B cell (primary cell): ENCODE measurements at regions of chr17 and their contacts with region 1.

Region 1: DNA sequence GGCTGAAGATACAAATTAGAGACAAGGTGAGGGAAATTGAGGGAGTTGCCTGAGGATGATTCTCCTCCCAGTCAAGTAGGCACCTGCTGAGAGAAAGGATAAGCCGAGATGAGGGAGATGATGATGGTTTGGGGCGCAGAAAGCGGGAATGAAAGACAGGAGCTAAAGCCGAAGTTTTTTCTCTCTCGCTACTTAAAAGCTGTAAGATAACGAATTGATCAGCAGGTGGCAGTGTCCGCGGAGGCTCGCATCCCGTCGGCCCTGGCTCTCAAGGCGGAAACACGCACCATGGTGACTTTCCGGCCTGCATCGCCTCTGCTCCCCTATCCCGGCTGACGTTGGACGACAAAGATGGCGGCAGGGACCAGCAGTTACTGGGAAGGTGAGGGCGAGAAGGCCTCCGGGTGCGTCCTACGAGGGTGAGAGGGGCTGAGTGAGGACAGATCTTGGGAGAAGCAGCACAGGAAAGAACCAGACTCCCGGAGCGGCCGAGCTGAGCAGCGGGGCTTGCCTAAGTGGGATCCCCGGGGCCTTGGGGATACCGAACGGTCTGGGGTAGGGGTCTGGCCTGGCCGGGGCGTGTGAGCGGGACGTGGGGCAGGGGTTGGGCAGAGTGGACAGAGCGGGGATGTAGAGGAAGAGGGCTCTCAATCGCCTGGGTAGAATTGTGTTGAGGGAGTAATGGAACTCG is at the start of gene GOSR1:
- DNase-seq: peak; percentile 94
- ATAC-seq: peak; percentile 99
- H3K4me3 ChIP-seq: peak within 1 kb of the TSS; percentile 77 to 93 (median 81)
- H3K4me3 Mint-ChIP-seq: peak within 1 kb of the TSS; percentile 94
- H3K27ac ChIP-seq: peak within 1 kb of the TSS; percentile 92 to 99
- H3K27ac Mint-ChIP-seq: peak within 1 kb of the TSS; percentile 96
- H3K4me1 ChIP-seq: peaks cover 20 to 22% of the 10 kb centered on the region in 2 donors
- H3K4me1 Mint-ChIP-seq: peaks cover 33% of the 10 kb centered on the region
- H3K27me3 ChIP-seq: peaks cover 0 to 4% (median 0%) of the 10 kb centered on the region in 4 experiments
- H3K27me3 Mint-ChIP-seq: no peaks in the 10 kb centered on the region
- CTCF ChIP-seq: peak; percentile 75
- total RNA-seq, gene GOSR1: 66.6 and 68.8 TPM in 2 replicates

Region 2: GRCh38 chr17:30116661-30117551 is 360.3 kb before region 1 on chr17 and contains the start of gene NSRP1:
- CTCF ChIA-PET with region 1: no interaction called
- POLR2A ChIA-PET with region 1: no interaction called
- intact Hi-C with region 1: loop called (anchors 5 kb)
- DNase-seq: peak; percentile 94
- ATAC-seq: peak; percentile 97
- H3K4me3 ChIP-seq: peak within 1 kb of the TSS; percentile 95 to 100 (median 99)
- H3K4me3 Mint-ChIP-seq: peak within 1 kb of the TSS; percentile 98
- H3K27ac ChIP-seq: peak within 1 kb of the TSS; percentile 99
- H3K27ac Mint-ChIP-seq: peak within 1 kb of the TSS; percentile 98
- H3K4me1 ChIP-seq: peaks cover 12 to 13% of the 10 kb centered on the region in 2 donors
- H3K4me1 Mint-ChIP-seq: peaks cover 40% of the 10 kb centered on the region
- H3K27me3 ChIP-seq: no peaks in the 10 kb centered on the region
- H3K27me3 Mint-ChIP-seq: no peaks in the 10 kb centered on the region
- CTCF ChIP-seq: no peak
- total RNA-seq, gene NSRP1: 41.0 and 46.2 TPM in 2 replicates

Region 3: GRCh38 chr17:30378824-30379302 is 98.4 kb before region 1 on chr17 and contains the start of gene CPD:
- CTCF ChIA-PET with region 1: no interaction called
- POLR2A ChIA-PET with region 1: no interaction called
- intact Hi-C with region 1: loop called (anchors 2 kb)
- DNase-seq: peak; percentile 96
- ATAC-seq: peak; percentile 97
- H3K4me3 ChIP-seq: peak within 1 kb of the TSS; percentile 62 to 97 (median 77)
- H3K4me3 Mint-ChIP-seq: peak within 1 kb of the TSS; percentile 88
- H3K27ac ChIP-seq: peak within 1 kb of the TSS in 1 of 2 donors; percentile 56
- H3K27ac Mint-ChIP-seq: peak within 1 kb of the TSS; percentile 80
- H3K4me1 ChIP-seq: peaks cover 17 to 19% of the 10 kb centered on the region in 2 donors
- H3K4me1 Mint-ChIP-seq: peaks cover 28% of the 10 kb centered on the region
- H3K27me3 ChIP-seq: peaks cover 0 to 42% (median 41%) of the 10 kb centered on the region in 4 experiments
- H3K27me3 Mint-ChIP-seq: peaks cover 50% of the 10 kb centered on the region
- CTCF ChIP-seq: no peak
- total RNA-seq, gene CPD: 12.5 and 15.6 TPM in 2 replicates

Region 4: GRCh38 chr17:30554839-30555751 is 77.9 kb after region 1 on chr17:
- CTCF ChIA-PET with region 1: no interaction called
- POLR2A ChIA-PET with region 1: no interaction called
- intact Hi-C with region 1: loop called (anchors 5 kb)
- DNase-seq: peak; percentile 30
- ATAC-seq: no peak
- H3K4me3 ChIP-seq: no peak overlapping the region
- H3K4me3 Mint-ChIP-seq: no peak overlapping the region
- H3K27ac ChIP-seq: no peak overlapping the region
- H3K27ac Mint-ChIP-seq: no peak overlapping the region
- H3K4me1 ChIP-seq: peaks cover 20 to 38% of the 10 kb centered on the region in 2 donors
- H3K4me1 Mint-ChIP-seq: peaks cover 34% of the 10 kb centered on the region
- H3K27me3 ChIP-seq: no peaks in the 10 kb centered on the region
- H3K27me3 Mint-ChIP-seq: no peaks in the 10 kb centered on the region
- CTCF ChIP-seq: no peak

Region 5: GRCh38 chr17:30600049-30600829 is 123.0 kb after region 1 on chr17:
- CTCF ChIA-PET with region 1: interaction called, 5 read pairs
- POLR2A ChIA-PET with region 1: interaction called, 4 read pairs
- intact Hi-C with region 1: loop called (anchors 1 kb)
- DNase-seq: peak; percentile 83
- ATAC-seq: peak; percentile 85
- H3K4me3 ChIP-seq: peak overlapping the region; percentile 19 to 86 (median 83)
- H3K4me3 Mint-ChIP-seq: peak overlapping the region; percentile 99
- H3K27ac ChIP-seq: peak overlapping the region; percentile 78 to 82
- H3K27ac Mint-ChIP-seq: peak overlapping the region; percentile 91
- H3K4me1 ChIP-seq: peaks cover 17% of the 10 kb centered on the region in 2 donors
- H3K4me1 Mint-ChIP-seq: peaks cover 28% of the 10 kb centered on the region
- H3K27me3 ChIP-seq: no peaks in the 10 kb centered on the region
- H3K27me3 Mint-ChIP-seq: no peaks in the 10 kb centered on the region
- CTCF ChIP-seq: peak; percentile 23

Region 6: DNA sequence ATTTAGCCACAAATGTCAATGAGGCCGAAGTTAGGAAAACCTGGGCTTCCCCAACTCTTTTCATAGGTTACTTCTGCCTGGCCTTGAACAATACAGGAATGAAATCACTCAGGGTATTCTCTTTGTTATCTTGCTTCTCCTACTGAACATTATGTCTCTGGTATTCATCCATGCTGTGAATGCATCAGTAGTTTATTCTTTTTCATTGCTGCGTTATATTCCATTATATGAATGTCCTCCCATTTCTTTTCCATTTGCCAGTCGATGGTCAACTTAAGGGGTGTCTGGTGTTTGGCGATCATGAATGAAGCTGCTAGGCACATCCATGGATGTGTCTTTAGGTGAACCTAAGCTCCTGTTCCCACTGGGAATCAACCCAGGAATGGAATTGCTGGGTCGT is 219.0 kb after region 1 on chr17:
- CTCF ChIA-PET with region 1: interaction called, 5 read pairs
- POLR2A ChIA-PET with region 1: no interaction called
- intact Hi-C with region 1: loop called (anchors 2 kb)
- DNase-seq: no peak
- ATAC-seq: no peak
- H3K4me3 ChIP-seq: no peak overlapping the region
- H3K4me3 Mint-ChIP-seq: no peak overlapping the region
- H3K27ac ChIP-seq: no peak overlapping the region
- H3K27ac Mint-ChIP-seq: no peak overlapping the region
- H3K4me1 ChIP-seq: peaks cover 3 to 13% of the 10 kb centered on the region in 2 donors
- H3K4me1 Mint-ChIP-seq: peaks cover 10% of the 10 kb centered on the region
- H3K27me3 ChIP-seq: peaks cover 0 to 14% (median 2%) of the 10 kb centered on the region in 4 experiments
- H3K27me3 Mint-ChIP-seq: peaks cover 12% of the 10 kb centered on the region
- CTCF ChIP-seq: no peak

Region 7: GRCh38 chr17:30824356-30825145 is 347.3 kb after region 1 on chr17 and contains the start of gene CRLF3:
- CTCF ChIA-PET with region 1: interaction called, 7 read pairs
- POLR2A ChIA-PET with region 1: no interaction called
- intact Hi-C with region 1: loop called (anchors 2 kb)
- DNase-seq: peak; percentile 93
- ATAC-seq: peak; percentile 96
- H3K4me3 ChIP-seq: peak within 1 kb of the TSS; percentile 87 to 97 (median 95)
- H3K4me3 Mint-ChIP-seq: peak within 1 kb of the TSS; percentile 94
- H3K27ac ChIP-seq: peak within 1 kb of the TSS; percentile 74 to 90
- H3K27ac Mint-ChIP-seq: peak within 1 kb of the TSS; percentile 97
- H3K4me1 ChIP-seq: peaks cover 41 to 44% of the 10 kb centered on the region in 2 donors
- H3K4me1 Mint-ChIP-seq: peaks cover 42% of the 10 kb centered on the region
- H3K27me3 ChIP-seq: no peaks in the 10 kb centered on the region
- H3K27me3 Mint-ChIP-seq: no peaks in the 10 kb centered on the region
- CTCF ChIP-seq: peak; percentile 73
- total RNA-seq, gene CRLF3: 83.2 and 88.3 TPM in 2 replicates